Left cardiac atrium (tissue), 4 donors: ENCODE measurements at regions of chr14 and their contacts with region 1.

Region 1: GRCh38 chr14:95515596-95516552 is 576 bp downstream of the SYNE3 start:
- DNase-seq: peak; percentile 79
- ATAC-seq: peak; percentile 78 to 79

Region 2: GRCh38 chr14:95222151-95222631 is 293.7 kb before region 1 on chr14:
- intact Hi-C with region 1: no loop called
- DNase-seq: no peak
- ATAC-seq: peak in 1 of 2 donors; percentile 50

Region 3: DNA sequence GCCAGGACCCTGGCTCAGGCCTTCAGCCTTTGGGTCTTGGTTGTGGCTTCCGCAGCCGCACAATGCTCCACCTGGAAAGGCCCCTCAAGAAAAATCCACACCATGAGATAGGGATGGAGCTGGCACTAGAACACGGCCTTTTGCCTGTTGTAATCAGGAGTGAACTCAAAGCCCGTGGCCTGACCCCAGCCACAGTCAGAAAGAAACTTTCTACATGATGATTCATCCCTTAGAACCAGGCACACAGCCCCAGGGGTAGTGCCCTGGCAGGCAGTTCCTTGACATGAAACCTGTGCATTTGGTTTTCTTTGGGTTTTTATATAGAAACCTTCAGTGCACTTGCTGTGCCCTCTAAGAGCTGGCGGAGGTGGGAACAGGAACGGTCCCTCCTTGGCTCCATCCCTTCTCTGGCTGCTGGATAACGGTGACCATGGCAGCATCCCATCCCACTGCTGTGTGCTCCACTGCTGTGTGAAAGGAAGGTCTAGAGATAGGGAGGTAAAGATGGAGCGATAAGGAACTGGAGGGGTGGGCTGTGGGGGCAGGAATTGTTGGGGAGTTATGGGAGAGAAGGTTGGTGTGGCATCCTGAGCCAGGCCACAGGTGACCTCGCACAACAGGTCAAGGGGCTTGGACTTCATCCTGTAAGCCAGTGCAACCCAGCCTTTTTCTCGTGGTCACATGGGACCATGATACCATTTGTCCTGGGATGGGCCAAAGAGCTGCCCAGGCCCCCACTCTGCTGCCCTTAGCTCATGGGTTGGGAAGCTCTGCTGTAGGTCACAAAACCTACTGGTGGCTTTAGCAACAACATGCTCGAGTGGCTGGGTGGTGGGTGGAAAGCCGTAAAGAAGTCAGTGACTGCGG is 201.0 kb before region 1 on chr14:
- intact Hi-C with region 1: no loop called
- DNase-seq: no peak
- ATAC-seq: peak; percentile 56 to 73

Region 4: GRCh38 chr14:95483309-95484165 is 32.3 kb before region 1 on chr14:
- intact Hi-C with region 1: loop called in 1 of 2 experiments (anchors 5 kb)
- DNase-seq: peak; percentile 89
- ATAC-seq: peak; percentile 87 to 94